ENCODE measurements at regions of chr3 and their contacts with region 1.

Region 1: DNA sequence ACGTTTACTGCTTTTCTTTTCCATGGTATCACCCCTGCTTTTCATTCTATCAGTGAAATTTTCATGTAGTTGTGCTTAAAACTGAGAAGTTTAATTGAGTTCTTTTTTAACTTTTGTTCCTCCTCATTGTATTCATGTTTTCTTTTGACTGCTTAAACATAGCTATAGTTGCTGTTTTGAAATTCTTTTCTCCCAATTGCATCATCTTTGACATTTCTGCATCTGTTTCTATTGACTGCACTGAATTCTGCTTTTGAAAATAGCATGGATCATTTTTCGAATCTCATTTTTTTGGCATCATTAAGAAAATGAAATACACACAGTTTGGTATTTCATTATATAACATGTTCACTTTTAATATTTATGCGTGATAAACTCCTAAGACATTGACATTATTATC is 694.9 kb downstream of the MECOM start:
- DNase-seq: no peak
- H3K4me3 ChIP-seq: no peak overlapping the region
- H3K27ac ChIP-seq: no peak overlapping the region
- H3K4me1 ChIP-seq: no peaks in the 10 kb centered on the region
- H3K27me3 ChIP-seq: no peaks in the 10 kb centered on the region
- CTCF ChIP-seq: no peak

Region 2: GRCh38 chr3:168984872-168985271 is 16.3 kb after region 1 on chr3:
- CTCF ChIA-PET with region 1: no interaction called
- POLR2A ChIA-PET with region 1: no interaction called
- intact Hi-C with region 1: loop called (anchors 1 kb)
- DNase-seq: no peak
- H3K4me3 ChIP-seq: no peak overlapping the region
- H3K27ac ChIP-seq: no peak overlapping the region
- H3K4me1 ChIP-seq: no peaks in the 10 kb centered on the region
- H3K27me3 ChIP-seq: no peaks in the 10 kb centered on the region
- CTCF ChIP-seq: no peak

Region 3: GRCh38 chr3:169122416-169122815 is 153.8 kb after region 1 on chr3:
- CTCF ChIA-PET with region 1: no interaction called
- POLR2A ChIA-PET with region 1: no interaction called
- intact Hi-C with region 1: loop called (anchors 5 kb)
- DNase-seq: no peak
- H3K4me3 ChIP-seq: no peak overlapping the region
- H3K27ac ChIP-seq: no peak overlapping the region
- H3K4me1 ChIP-seq: no peaks in the 10 kb centered on the region
- H3K27me3 ChIP-seq: no peaks in the 10 kb centered on the region
- CTCF ChIP-seq: no peak

Region 4: DNA sequence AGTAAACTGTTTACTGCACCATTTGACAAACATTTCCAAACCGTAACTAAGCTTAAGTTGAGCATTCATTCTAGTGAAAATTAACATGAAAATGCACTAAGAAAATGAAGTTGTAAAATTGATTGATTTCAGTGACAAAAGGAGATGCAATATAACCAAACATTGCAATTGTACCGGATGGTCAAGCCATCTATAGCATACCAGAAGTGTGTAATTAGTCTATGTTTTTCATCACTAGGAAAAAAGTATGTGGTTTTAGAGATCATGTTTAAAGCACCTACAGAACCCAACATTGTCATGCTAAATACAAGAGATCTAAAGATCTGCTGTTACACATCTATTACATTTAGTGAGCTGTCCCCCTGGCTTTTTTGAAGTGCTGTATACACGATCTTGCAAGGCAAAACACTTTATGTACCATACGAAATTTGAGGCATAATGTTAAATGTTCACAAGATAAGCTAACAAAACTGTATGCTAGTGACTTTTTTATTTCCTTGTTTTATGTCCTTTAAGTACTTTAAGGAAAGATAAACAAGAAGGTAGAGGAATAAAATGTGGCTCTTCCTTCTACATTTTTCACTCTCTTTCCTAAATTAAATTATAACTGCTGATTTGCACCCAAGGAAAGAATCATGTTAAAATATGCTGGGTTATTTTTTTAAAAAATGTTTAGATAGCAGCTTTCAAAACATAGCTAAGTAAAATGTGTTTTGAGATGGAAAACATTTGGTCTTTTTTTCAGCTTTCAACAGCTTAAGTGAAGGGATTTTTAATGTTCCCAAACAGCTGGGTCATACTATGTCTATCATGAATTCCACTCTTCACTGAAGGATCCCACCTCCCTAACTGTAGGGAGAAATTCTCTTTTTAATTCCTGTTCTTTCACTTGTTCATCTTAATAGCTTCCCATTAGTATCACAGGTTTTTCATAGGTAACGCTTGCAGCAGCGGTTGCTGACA is 196.9 kb after region 1 on chr3:
- CTCF ChIA-PET with region 1: no interaction called
- POLR2A ChIA-PET with region 1: no interaction called
- intact Hi-C with region 1: no loop called
- DNase-seq: no peak
- H3K4me3 ChIP-seq: no peak overlapping the region
- H3K27ac ChIP-seq: no peak overlapping the region
- H3K4me1 ChIP-seq: peaks cover 22% of the 10 kb centered on the region
- H3K27me3 ChIP-seq: no peaks in the 10 kb centered on the region
- CTCF ChIP-seq: no peak

Measured in PC-9 (cell line).